B cell (primary cell): ENCODE measurements at regions of chr6 and their contacts with region 1.

Region 1: DNA sequence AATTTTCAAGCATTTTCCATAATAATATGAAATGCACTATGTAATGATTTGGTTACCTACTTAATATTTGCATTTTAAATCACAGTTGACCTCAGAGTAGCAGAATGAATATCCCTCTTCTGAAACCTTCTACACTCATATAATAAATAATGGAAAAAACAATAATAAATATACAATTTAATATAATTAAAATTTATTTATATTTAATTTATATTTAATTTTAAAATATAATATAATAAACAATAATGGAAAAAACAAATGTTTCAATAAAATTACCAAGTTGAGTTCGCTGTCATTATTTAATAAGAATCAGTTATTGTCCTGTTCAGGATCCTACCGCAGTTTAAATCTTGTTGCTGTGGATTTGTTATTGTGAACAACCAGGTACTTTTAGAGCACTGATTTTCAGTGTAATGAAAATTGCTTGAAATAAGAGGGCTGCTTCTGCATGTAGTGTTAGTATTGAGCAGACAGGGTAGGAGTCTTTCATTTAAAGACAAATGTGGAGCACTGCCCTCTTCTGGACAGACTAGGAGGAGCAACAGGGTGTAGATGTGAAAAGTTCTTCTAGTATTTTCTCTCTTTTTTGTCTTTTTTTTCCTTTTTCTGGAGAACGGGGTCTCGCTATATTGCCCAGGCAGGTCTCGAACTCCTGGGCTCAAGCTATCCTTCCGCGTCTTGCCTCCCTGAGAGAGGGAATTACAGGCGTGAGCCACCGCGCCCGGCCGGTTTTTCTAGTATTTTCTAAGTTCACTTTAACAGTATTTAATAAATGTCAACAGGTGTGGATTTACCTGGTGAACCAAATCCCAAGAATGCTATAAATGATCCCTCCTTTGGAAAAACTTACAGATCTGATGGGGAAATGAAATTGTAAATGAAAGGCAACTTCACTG is 13.6 kb downstream of the TRAPPC3L start:
- DNase-seq: peak; percentile 82
- ATAC-seq: peak; percentile 98
- H3K4me3 ChIP-seq: no peak overlapping the region
- H3K4me3 Mint-ChIP-seq: no peak overlapping the region
- H3K27ac ChIP-seq: no peak overlapping the region
- H3K27ac Mint-ChIP-seq: no peak overlapping the region
- H3K4me1 ChIP-seq: peaks cover 0 to 5% of the 10 kb centered on the region in 2 donors
- H3K4me1 Mint-ChIP-seq: peaks cover 11% of the 10 kb centered on the region
- H3K27me3 ChIP-seq: no peaks in the 10 kb centered on the region
- H3K27me3 Mint-ChIP-seq: peaks cover 3% of the 10 kb centered on the region
- CTCF ChIP-seq: peak; percentile 90

Region 2: DNA sequence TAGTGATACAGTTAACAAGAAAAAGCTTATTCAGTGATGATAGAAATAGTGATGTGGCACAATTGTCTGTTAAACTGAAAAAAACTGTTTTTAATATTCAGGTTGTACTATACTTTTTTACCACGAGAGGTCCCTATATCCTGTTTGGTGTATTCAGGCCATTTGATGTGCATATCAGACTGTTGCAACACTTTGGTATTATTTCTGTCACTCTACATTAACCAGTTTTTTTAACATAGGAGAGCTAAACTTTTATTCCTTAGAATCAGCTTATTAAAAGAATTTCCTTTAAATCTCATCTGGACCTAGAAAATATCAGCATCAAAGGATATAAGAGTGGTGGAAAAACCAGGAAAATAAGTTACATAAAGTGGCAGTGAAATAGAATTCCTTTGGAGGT is 314.9 kb before region 1 on chr6:
- CTCF ChIA-PET with region 1: interaction called, 27 read pairs
- POLR2A ChIA-PET with region 1: no interaction called
- intact Hi-C with region 1: no loop called
- DNase-seq: peak; percentile 51
- ATAC-seq: no peak
- H3K4me3 ChIP-seq: no peak overlapping the region
- H3K4me3 Mint-ChIP-seq: no peak overlapping the region
- H3K27ac ChIP-seq: no peak overlapping the region
- H3K27ac Mint-ChIP-seq: no peak overlapping the region
- H3K4me1 ChIP-seq: no peaks in the 10 kb centered on the region
- H3K4me1 Mint-ChIP-seq: no peaks in the 10 kb centered on the region
- H3K27me3 ChIP-seq: no peaks in the 10 kb centered on the region
- H3K27me3 Mint-ChIP-seq: no peaks in the 10 kb centered on the region
- CTCF ChIP-seq: peak; percentile 66

Region 3: DNA sequence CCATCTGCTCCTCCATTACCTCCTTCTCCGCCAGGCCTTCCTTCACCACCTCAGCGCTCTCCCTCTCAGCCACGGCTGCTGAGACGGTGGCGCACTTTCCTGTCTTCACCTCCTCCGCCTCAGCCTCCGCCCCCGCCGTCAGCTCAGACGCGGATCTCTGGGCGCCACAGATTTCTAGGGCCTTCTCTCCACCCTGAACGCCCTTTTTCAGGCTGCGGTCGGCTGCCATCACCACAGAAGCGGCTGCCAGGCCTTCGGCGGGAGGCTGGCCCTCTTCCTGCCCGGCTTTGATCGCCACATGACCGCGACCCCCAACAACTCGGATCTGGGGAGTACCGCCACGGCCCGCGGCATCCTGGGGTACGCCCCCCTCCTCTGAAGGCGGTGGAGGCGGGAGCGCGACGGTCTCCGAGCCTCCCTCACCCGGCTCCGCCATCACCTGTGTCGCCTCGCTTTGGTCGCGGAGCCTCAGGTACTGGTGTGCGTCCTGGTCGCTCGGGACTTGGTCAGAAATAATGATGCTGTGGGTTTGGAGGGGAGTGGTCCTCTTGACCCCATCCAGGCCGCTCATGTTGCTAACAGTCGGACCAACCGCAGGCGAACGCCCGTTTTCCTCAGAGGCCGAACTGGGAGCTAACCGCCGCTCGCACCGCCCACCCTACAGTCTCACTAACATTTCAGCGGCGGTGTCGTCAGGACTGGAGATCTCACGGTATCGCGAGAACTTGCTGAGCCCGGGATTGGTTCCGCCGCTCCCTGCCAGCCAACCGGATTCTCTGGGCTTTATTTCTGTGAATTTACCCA is 252.5 kb before region 1 on chr6 and contains the start of gene TSPYL1:
- CTCF ChIA-PET with region 1: interaction called, 29 read pairs
- POLR2A ChIA-PET with region 1: no interaction called
- intact Hi-C with region 1: no loop called
- DNase-seq: peak; percentile 98
- ATAC-seq: peak; percentile 88
- H3K4me3 ChIP-seq: peak within 1 kb of the TSS; percentile 89 to 96 (median 94)
- H3K4me3 Mint-ChIP-seq: peak within 1 kb of the TSS; percentile 97
- H3K27ac ChIP-seq: peak within 1 kb of the TSS; percentile 99
- H3K27ac Mint-ChIP-seq: peak within 1 kb of the TSS; percentile 100
- H3K4me1 ChIP-seq: peaks cover 41 to 48% of the 10 kb centered on the region in 2 donors
- H3K4me1 Mint-ChIP-seq: peaks cover 60% of the 10 kb centered on the region
- H3K27me3 ChIP-seq: no peaks in the 10 kb centered on the region
- H3K27me3 Mint-ChIP-seq: no peaks in the 10 kb centered on the region
- CTCF ChIP-seq: no peak
- total RNA-seq, gene TSPYL1: 98.9 and 101 TPM in 2 replicates

Region 4: DNA sequence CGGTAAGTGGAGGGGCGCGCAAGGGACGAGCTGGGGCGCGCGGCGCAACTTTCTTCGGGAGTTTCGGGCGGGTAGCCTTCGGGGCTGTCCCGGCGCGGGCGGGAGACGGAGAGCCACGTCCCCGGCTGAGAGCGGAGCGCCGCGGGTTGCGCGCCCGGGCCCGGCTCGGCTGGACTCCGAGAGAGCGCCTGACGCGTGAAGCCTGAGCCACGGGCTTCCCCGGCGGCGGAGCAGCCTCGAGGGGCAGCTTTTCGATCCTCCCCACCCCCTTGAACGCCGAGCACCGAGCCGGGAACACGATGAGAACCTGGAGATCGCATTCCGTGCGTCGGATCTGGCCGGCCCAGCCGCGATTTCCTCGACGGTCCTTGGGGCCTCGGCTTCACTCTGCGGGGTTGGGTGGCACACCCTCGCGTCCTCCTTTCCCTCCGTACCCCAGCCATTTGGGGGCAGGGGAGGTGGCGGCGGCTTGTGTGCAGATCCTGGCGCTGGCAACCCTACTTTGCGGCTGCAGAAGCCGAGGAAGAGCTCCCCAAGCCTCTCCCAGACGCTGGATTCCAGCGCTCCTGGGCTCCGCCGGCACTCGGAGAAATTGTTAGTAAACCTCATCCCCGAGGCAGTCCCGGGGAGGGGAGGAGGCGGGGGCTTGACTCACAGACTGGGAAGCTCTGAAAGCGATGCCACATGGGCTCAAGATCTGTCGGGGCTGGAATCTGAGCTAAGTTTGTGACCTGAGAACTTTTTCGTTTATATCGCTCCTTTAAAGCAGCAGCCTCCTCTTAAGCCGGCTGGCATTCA is 160.6 kb before region 1 on chr6:
- CTCF ChIA-PET with region 1: interaction called, 5 read pairs
- POLR2A ChIA-PET with region 1: no interaction called
- intact Hi-C with region 1: loop called (anchors 1 kb)
- DNase-seq: no peak
- ATAC-seq: peak; percentile 37
- H3K4me3 ChIP-seq: peak overlapping the region; percentile 62 to 89 (median 85)
- H3K4me3 Mint-ChIP-seq: peak overlapping the region; percentile 92
- H3K27ac ChIP-seq: peak overlapping the region in 1 of 2 donors; percentile 91
- H3K27ac Mint-ChIP-seq: peak overlapping the region; percentile 85
- H3K4me1 ChIP-seq: peaks cover 28 to 30% of the 10 kb centered on the region in 2 donors
- H3K4me1 Mint-ChIP-seq: peaks cover 30% of the 10 kb centered on the region
- H3K27me3 ChIP-seq: peaks cover 0 to 2% (median 0%) of the 10 kb centered on the region in 4 experiments
- H3K27me3 Mint-ChIP-seq: peaks cover 10% of the 10 kb centered on the region
- CTCF ChIP-seq: no peak

Region 5: DNA sequence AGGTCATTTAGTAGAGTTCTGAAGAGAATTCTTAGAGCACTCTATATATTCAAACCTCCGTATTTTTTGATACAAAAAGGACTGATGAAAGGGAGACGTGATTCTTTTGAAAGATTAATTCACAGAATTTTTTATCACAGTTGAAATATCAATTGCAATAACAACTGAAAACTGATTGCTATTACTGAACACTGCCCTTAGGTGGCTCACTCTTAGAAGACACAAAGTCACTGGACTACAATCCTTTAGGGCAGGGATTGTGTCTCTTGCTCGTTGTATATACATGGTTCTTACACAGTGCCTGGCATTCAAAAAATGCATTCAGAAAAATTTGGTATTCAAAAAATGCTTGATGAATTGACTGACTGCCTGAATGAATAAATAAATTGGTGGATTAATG is 87.8 kb before region 1 on chr6:
- CTCF ChIA-PET with region 1: interaction called, 60 read pairs
- POLR2A ChIA-PET with region 1: no interaction called
- intact Hi-C with region 1: loop called (anchors 1 kb)
- DNase-seq: peak; percentile 56
- ATAC-seq: peak; percentile 86
- H3K4me3 ChIP-seq: no peak overlapping the region
- H3K4me3 Mint-ChIP-seq: no peak overlapping the region
- H3K27ac ChIP-seq: no peak overlapping the region
- H3K27ac Mint-ChIP-seq: no peak overlapping the region
- H3K4me1 ChIP-seq: peaks cover 16 to 23% of the 10 kb centered on the region in 2 donors
- H3K4me1 Mint-ChIP-seq: peaks cover 27% of the 10 kb centered on the region
- H3K27me3 ChIP-seq: no peaks in the 10 kb centered on the region
- H3K27me3 Mint-ChIP-seq: no peaks in the 10 kb centered on the region
- CTCF ChIP-seq: peak; percentile 75

Region 6: GRCh38 chr6:116648156-116648555 is 116.2 kb after region 1 on chr6:
- CTCF ChIA-PET with region 1: interaction called, 26 read pairs
- POLR2A ChIA-PET with region 1: no interaction called
- intact Hi-C with region 1: loop called (anchors 1 kb)
- DNase-seq: no peak
- ATAC-seq: no peak
- H3K4me3 ChIP-seq: no peak overlapping the region
- H3K4me3 Mint-ChIP-seq: no peak overlapping the region
- H3K27ac ChIP-seq: no peak overlapping the region
- H3K27ac Mint-ChIP-seq: no peak overlapping the region
- H3K4me1 ChIP-seq: no peaks in the 10 kb centered on the region
- H3K4me1 Mint-ChIP-seq: no peaks in the 10 kb centered on the region
- H3K27me3 ChIP-seq: no peaks in the 10 kb centered on the region
- H3K27me3 Mint-ChIP-seq: no peaks in the 10 kb centered on the region
- CTCF ChIP-seq: no peak

Region 7: GRCh38 chr6:116779573-116780164 is 247.7 kb after region 1 on chr6:
- CTCF ChIA-PET with region 1: no interaction called
- POLR2A ChIA-PET with region 1: no interaction called
- intact Hi-C with region 1: no loop called
- DNase-seq: peak; percentile 11
- ATAC-seq: no peak
- H3K4me3 ChIP-seq: no peak overlapping the region
- H3K4me3 Mint-ChIP-seq: no peak overlapping the region
- H3K27ac ChIP-seq: no peak overlapping the region
- H3K27ac Mint-ChIP-seq: no peak overlapping the region
- H3K4me1 ChIP-seq: no peaks in the 10 kb centered on the region
- H3K4me1 Mint-ChIP-seq: no peaks in the 10 kb centered on the region
- H3K27me3 ChIP-seq: peaks cover 0 to 4% (median 0%) of the 10 kb centered on the region in 4 experiments
- H3K27me3 Mint-ChIP-seq: peaks cover 16% of the 10 kb centered on the region
- CTCF ChIP-seq: peak; percentile 40